Calu3 (cell line): ENCODE measurements at regions of chrX and their contacts with region 1.

Region 1: DNA sequence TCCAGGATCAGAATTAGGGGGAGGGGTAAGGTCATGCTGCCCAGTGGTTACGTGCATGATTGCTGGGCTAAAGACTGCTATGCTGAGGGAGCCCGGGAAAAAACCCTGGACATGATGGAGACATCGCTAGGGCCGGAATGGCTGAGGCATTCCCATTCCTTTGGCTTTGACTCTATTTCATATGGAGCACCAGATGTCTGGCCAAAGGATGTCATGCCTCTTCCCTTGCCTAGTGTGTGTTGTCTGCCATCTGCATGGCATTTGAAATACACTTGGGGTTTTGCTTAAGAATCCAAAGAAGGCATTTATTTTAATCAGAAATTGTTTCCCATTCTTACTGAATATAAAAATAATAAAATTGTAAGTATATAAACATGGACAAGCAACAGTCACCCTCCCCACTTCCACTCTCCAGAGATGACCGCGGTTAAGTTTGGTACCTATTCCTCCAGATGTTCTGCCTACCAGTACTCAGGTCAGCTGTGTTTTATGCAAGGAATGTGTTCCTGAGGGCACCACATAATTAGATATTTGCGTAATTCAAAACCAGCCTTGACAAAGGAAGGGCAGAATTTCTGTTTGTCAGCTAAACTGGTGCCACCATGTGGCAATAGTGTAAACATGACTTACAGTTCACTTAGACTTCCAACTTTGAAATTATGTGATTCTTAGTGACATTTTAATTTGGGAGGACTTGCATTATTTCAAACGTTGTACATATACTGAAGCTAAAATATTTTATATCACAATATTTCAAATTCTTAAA is 105.9 kb downstream of the CT47B1 start:
- DNase-seq: peak; percentile 19
- H3K4me3 Mint-ChIP-seq: no peak overlapping the region
- H3K27ac Mint-ChIP-seq: no peak overlapping the region
- H3K4me1 Mint-ChIP-seq: peaks cover 6% of the 10 kb centered on the region
- H3K27me3 Mint-ChIP-seq: no peaks in the 10 kb centered on the region
- CTCF ChIP-seq: no peak

Region 2: GRCh38 chrX:120499301-120500072 is 270.3 kb before region 1 on chrX:
- CTCF ChIA-PET with region 1: no interaction called
- intact Hi-C with region 1: loop called (anchors 1 kb)
- DNase-seq: no peak
- H3K4me3 Mint-ChIP-seq: no peak overlapping the region
- H3K27ac Mint-ChIP-seq: peak overlapping the region; percentile 13
- H3K4me1 Mint-ChIP-seq: no peaks in the 10 kb centered on the region
- H3K27me3 Mint-ChIP-seq: no peaks in the 10 kb centered on the region
- CTCF ChIP-seq: no peak

Region 3: GRCh38 chrX:120672390-120672789 is 97.4 kb before region 1 on chrX:
- CTCF ChIA-PET with region 1: no interaction called
- intact Hi-C with region 1: loop called (anchors 5 kb)
- DNase-seq: peak; percentile 50
- H3K4me3 Mint-ChIP-seq: no peak overlapping the region
- H3K27ac Mint-ChIP-seq: peak overlapping the region; percentile 79
- H3K4me1 Mint-ChIP-seq: peaks cover 25% of the 10 kb centered on the region
- H3K27me3 Mint-ChIP-seq: no peaks in the 10 kb centered on the region
- CTCF ChIP-seq: no peak